BJ (cell line): ENCODE measurements at regions of chr18 and their contacts with region 1.

Region 1: GRCh38 chr18:55287149-55287806 is 300.7 kb downstream of the TCF4 start:
- DNase-seq: no peak
- H3K4me3 ChIP-seq: no peak overlapping the region
- H3K27me3 ChIP-seq: no peaks in the 10 kb centered on the region
- CTCF ChIP-seq: no peak

Region 2: DNA sequence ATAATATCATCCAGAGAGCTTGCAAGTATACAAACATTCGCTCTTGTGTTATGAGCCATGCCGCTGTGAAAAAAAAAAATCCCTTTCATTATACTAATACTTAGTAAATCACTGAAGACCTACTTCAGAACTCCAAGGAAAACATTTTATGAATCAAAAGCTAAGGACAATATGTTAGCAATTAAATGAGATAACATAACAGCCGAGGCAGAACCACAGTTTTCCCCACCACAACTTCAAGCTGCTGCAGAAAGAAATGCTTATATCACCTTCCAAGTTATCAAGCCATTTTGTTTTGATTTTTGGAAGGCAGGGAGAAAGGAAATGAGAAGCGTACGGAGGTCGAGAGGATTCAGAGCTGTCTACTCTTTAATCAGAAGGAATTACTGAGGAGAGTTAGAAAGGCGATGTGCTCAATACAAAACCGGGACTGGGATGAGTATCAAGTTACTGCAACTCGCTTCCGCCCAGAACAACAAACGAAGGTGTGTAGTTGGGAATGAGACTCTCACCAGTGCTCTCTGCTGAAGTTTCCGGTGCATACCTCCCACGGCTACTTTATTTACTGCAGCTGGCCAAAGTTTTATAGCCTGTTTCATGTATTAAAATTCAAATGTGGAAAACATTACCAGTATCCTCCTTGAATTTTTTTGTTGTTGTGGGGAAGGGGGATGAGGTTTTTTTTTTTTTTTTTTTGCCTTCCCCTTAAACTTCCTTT is 35.9 kb before region 1 on chr18:
- CTCF ChIA-PET with region 1: no interaction called
- POLR2A ChIA-PET with region 1: interaction called, 16 read pairs
- DNase-seq: no peak
- H3K4me3 ChIP-seq: peak overlapping the region; percentile 1; the same call in 1 of the 2 replicates
- H3K27me3 ChIP-seq: no peaks in the 10 kb centered on the region
- CTCF ChIP-seq: no peak